ENCODE measurements at regions of chr9 and their contacts with region 1.

Region 1: DNA sequence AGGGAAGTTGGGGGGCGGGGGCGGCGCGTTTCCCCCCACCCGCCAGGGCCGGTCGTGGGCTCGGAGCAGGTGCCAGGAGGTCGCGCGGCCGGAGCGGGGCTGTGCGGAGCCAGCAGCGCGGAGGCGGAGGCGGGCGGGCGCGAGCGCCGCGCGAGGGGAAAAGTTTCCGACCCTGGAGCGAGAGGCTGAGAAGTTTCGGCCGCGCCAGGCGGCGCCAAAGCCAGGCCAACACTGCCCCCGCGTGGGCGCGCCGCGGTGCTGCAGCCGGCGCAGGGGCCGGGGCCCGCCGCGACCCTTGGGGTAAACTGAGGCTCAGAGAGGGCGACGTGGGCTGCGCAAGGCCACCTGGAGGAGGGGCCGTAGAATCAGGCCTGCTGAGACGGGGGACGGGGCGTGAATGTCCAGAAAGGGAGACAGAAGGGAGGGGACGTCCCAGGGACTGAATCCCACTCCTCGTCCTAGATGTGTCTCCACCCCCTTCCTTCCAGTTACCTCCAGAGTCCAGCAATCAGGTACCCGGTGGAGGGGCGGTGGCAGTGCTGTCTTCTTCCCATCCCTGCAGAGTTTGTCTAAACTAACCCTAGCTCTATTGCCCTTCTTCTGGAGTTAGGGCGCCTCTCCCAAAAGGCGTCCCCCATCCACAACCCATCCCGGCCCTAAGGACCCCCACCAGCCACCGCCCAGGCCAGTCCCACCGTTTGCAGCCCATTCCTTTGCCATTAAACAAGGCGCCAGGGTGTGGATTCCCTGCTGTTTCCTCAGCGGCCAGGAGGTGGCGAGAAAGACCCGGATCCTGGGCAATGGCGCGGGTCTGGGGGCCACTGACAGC is 10.2 kb downstream of the C9orf50 start:
- DNase-seq: peak; percentile 60 to 76 (median 72)
- H3K4me3 ChIP-seq: peak overlapping the region; percentile 48 to 75 (median 66)
- H3K27ac ChIP-seq: peak overlapping the region in 1 of 2 experiments; percentile 34
- H3K4me1 ChIP-seq: peaks cover 0 to 54% (median 50%) of the 10 kb centered on the region in 4 experiments
- H3K27me3 ChIP-seq: no peaks in the 10 kb centered on the region

Region 2: GRCh38 chr9:129320575-129321263 is 290.0 kb before region 1 on chr9:
- CTCF ChIA-PET with region 1: interaction called, 11 read pairs
- POLR2A ChIA-PET with region 1: no interaction called
- DNase-seq: peak; percentile 84 to 90 (median 90)
- H3K4me3 ChIP-seq: peak overlapping the region; percentile 4 to 69 (median 53)
- H3K27ac ChIP-seq: peak overlapping the region in 1 of 2 experiments; percentile 34
- H3K4me1 ChIP-seq: peaks cover 0 to 30% (median 24%) of the 10 kb centered on the region in 4 experiments
- H3K27me3 ChIP-seq: no peaks in the 10 kb centered on the region